Left colon (tissue), 2 donors: ENCODE measurements at regions of chr18 and their contacts with region 1.

Region 1: DNA sequence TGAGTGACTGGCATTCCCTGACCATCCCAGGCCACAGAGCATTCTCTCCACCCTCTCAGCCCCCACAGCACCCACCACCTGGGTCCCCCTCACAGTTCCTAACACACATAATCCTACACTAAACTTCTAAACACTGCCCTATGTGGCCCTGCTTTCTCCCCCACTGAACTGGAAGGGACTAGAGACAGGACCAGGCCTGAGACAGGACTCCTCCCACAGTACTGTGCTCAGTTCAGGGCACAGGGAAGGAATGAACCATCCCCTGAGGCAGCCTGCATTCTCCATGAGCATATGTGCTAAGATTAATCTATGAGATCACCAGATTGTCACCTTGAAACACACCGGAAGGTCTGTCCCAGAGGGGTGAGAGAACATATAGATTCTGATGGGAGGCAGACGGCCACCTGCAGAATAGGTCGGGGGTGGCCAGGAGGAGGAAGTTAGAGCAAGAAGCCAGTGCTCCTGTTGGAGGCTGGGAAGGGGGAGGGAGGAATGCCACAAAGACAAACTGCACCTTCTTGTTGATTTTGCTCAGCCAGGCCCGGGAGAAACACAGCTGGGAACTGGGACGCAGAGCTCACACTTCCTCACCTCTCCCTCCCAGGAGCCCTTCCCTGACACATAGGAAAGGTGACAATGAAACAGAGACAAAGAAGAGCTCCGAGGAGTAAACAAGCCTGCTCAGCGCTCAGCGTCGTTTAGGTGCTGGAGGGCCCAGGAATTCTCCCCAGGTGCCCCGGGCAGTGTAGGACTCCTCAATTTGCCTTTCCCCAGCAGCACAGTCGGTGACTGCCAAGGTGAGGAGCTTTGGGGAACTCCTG is 52.2 kb downstream of the ZBTB7C start:
- DNase-seq: no peak
- ATAC-seq: peak; percentile 79

Region 2: GRCh38 chr18:48049757-48050156 is 307.3 kb before region 1 on chr18:
- intact Hi-C with region 1: loop called in 1 of 2 experiments (anchors 10 kb)
- DNase-seq: peak in 1 of 2 donors; percentile 45
- ATAC-seq: peak; percentile 28